Heart left ventricle (tissue), 16 donors: ENCODE measurements at regions of chr2 and their contacts with region 1.

Region 1: DNA sequence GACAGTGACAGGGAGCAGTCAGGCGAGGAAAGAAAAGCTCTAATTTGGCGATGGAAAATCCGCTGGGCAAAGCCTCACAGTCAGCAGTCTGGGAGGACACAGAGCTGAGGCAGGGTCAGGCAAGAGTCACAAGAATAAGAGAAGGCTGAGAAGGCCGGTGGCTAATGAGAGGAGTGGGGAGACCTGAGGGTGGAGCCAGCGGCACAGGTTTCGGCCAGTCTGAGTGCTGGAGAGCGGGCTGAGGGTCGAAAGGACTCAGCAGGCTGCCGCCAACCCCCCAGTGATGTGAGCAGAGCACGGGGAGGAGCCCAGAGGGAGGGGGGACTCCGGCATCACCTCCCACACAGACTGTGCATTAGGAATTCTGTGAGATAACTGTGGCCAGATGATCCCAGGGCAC is 500.6 kb upstream of the MYT1L start:
- DNase-seq: peak in 1 of 5 donors; percentile 2
- ATAC-seq: no peak
- H3K4me3 ChIP-seq: no peak overlapping the region
- H3K27ac ChIP-seq: no peak overlapping the region
- H3K4me1 ChIP-seq: no peaks in the 10 kb centered on the region
- H3K27me3 ChIP-seq: no peaks in the 10 kb centered on the region
- CTCF ChIP-seq: no peak
- POLR2A ChIP-seq: no peak

Region 2: GRCh38 chr2:2788076-2788475 is 43.6 kb before region 1 on chr2:
- intact Hi-C with region 1: loop called in 1 of 10 experiments (anchors 2 kb)
- DNase-seq: no peak
- ATAC-seq: no peak
- H3K4me3 ChIP-seq: no peak overlapping the region
- H3K27ac ChIP-seq: no peak overlapping the region
- H3K4me1 ChIP-seq: no peaks in the 10 kb centered on the region
- H3K27me3 ChIP-seq: peaks cover 0 to 4% (median 0%) of the 10 kb centered on the region in 9 donors
- CTCF ChIP-seq: no peak
- POLR2A ChIP-seq: no peak

Region 3: DNA sequence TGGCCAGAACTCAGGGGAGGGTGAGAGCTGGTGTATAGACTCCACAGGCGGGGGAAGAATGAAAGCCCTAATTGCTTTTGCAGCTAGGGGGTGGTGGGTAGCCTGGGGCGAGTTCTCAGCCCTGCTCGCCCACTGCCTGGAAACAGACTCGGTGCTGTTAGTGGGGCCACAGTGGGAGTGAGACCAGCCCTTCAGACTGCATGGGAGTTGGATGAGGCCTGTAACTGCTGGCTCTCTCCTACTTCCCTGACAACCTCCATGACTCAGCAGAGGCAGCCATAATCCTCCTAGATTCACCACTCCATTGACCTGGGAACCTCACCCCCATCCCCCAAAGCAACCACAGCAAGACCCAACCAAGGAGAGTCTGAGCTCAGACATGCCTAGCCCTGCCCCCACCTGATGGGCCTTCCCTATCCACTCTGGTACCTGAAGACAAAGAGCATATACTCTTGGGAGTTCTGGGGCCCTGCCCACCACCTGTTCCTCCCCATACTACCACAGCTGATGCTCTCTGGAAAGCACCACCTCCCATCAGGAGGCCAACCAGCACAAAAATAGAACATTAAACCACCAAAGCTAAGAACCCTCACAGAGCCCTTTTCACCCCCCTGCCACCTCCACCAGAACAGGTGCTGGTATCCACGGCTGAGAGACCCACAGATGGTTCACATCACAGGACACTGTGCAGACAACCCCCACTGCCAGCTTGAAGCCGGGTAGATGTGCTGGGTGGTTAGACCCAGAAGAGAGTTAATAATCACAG is 319.7 kb after region 1 on chr2:
- intact Hi-C with region 1: no loop called
- DNase-seq: no peak
- ATAC-seq: no peak
- H3K4me3 ChIP-seq: no peak overlapping the region
- H3K27ac ChIP-seq: no peak overlapping the region
- H3K4me1 ChIP-seq: no peaks in the 10 kb centered on the region
- H3K27me3 ChIP-seq: no peaks in the 10 kb centered on the region
- CTCF ChIP-seq: no peak
- POLR2A ChIP-seq: no peak